Ascending aorta (tissue), 2 donors: ENCODE measurements at regions of chr4 and their contacts with region 1.

Region 1: GRCh38 chr4:173591760-173592159 is 61.7 kb upstream of the HAND2 start:
- DNase-seq: no peak
- H3K4me3 ChIP-seq: no peak overlapping the region
- H3K27ac ChIP-seq: peak overlapping the region in 1 of 2 donors; percentile 34
- H3K4me1 ChIP-seq: peaks cover 0 to 5% of the 10 kb centered on the region in 2 donors
- H3K27me3 ChIP-seq: no peaks in the 10 kb centered on the region
- CTCF ChIP-seq: no peak

Region 2: DNA sequence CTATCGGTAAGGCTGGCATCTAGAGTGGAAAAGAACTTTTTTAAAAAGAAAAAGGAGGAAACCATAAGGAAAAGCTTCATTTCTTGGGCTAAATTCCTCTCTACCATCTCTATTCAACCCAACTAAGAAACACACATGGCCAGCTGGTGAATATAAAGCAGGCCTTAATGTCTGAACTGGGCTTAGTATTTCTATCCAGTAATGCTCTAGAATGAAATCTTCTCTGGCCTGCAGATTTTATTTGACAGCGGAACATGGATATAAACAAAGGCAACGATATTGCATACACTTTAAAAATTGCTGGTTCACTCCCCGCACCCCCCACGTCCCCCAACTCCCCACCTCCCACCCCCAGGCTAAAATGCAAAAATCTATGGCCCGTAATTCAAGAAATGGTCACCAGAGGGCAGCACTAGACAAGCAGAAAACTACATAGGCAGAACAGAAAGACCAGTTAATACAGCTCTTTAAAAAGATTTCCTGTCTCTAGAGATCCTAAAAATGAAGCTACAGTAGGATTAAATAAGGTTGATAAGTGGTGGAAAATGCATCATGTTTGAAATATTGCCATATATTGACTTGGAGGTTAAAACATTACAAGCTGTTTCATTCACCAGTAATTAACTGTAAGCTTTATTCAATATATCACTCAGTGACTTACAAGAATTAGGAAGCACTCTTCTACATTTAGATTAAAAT is 578.4 kb before region 1 on chr4:
- intact Hi-C with region 1: no loop called
- DNase-seq: peak in 1 of 2 donors; percentile 72
- H3K4me3 ChIP-seq: no peak overlapping the region
- H3K27ac ChIP-seq: no peak overlapping the region
- H3K4me1 ChIP-seq: peaks cover 4 to 5% of the 10 kb centered on the region in 2 donors
- H3K27me3 ChIP-seq: no peaks in the 10 kb centered on the region
- CTCF ChIP-seq: peak; percentile 40 to 89 (median 85)

Region 3: GRCh38 chr4:173752610-173753230 is 161.0 kb after region 1 on chr4:
- intact Hi-C with region 1: loop called (anchors 10 kb)
- DNase-seq: no peak
- H3K4me3 ChIP-seq: no peak overlapping the region
- H3K27ac ChIP-seq: no peak overlapping the region
- H3K4me1 ChIP-seq: no peaks in the 10 kb centered on the region
- H3K27me3 ChIP-seq: no peaks in the 10 kb centered on the region
- CTCF ChIP-seq: peak in 1 of 3 experiments; percentile 29

Region 4: GRCh38 chr4:174147863-174148262 is 556.1 kb after region 1 on chr4:
- intact Hi-C with region 1: no loop called
- DNase-seq: no peak
- H3K4me3 ChIP-seq: no peak overlapping the region
- H3K27ac ChIP-seq: no peak overlapping the region
- H3K4me1 ChIP-seq: no peaks in the 10 kb centered on the region
- H3K27me3 ChIP-seq: no peaks in the 10 kb centered on the region
- CTCF ChIP-seq: no peak

Region 5: GRCh38 chr4:174173360-174173759 is 581.6 kb after region 1 on chr4:
- intact Hi-C with region 1: no loop called
- DNase-seq: no peak
- H3K4me3 ChIP-seq: no peak overlapping the region
- H3K27ac ChIP-seq: no peak overlapping the region
- H3K4me1 ChIP-seq: no peaks in the 10 kb centered on the region
- H3K27me3 ChIP-seq: no peaks in the 10 kb centered on the region
- CTCF ChIP-seq: no peak